ENCODE measurements at regions of chr22 and their contacts with region 1.

Region 1: DNA sequence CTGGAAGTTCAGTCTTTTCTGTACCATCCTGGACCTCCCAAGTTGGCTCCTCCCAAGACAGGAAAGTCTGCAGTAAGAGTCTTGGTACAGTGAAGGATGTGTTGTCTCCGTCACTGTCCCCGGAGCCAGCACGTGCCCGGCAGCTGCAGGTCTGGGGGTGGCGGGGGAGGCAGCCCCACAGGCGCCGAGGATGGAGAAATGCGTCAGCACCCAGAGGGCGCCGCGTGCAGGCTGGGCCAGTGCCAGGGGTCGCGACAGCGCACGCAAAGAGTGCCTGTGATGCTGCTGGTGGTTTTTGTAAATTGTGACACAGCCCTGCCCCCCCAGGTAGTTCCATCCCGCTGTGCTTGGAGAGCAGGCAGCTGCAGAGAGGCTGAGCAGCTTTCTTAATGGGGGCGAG is 1200.5 kb downstream of the BRD1 start:
- DNase-seq: no peak
- ATAC-seq: no peak
- H3K4me3 ChIP-seq: no peak overlapping the region
- H3K27ac ChIP-seq: no peak overlapping the region
- H3K4me1 ChIP-seq: no peaks in the 10 kb centered on the region
- H3K27me3 ChIP-seq: no peaks in the 10 kb centered on the region
- CTCF ChIP-seq: no peak
- EP300 ChIP-seq: no peak
- POLR2A ChIP-seq: no peak
- RAD21 ChIP-seq: no peak

Region 2: DNA sequence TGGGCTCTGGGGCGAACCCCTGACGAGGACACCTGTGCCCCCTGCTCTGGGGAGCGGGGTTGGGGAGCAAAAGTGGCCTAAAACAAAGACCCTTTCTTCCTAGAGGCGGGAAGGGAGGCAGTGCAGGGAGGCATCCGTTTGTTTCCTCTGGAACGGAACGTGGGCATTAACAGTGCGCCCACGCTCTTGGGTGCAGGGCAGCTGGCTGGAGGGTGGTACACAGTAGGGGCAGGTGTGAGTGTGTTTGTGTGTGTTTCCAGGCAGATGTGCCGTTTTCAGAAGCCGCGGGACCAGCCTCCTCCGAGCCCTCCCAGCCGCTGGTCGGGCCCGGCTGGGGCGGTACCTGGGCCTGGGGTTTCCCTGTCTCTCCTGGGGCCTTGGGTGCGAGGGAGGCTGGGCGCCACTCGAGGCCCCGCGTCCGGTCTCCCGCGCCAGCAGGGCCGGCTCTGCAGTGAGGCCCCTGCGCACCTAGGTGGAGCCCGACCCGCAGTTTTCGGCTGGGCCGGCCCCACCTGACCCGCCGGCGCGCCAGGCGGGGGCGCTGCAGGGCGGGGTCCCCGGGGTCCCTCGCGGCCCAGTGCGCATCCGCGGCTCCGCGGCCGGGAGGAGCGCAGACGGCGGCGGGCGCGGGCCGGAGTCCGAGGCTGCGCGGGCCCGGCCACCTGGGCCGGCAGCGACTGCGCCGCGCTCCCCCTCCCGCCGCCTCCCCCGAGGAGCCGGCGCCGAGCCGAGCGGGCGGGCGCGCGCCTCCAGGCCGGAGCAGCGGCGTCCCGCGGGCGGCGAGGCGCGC is 52.2 kb before region 1 on chr22:
- CTCF ChIA-PET with region 1: no interaction called
- POLR2A ChIA-PET with region 1: no interaction called
- RAD21 ChIA-PET with region 1: no interaction called
- SMC1A ChIA-PET with region 1: no interaction called
- in situ Hi-C with region 1: loop called (anchors 5 kb)
- intact Hi-C with region 1: no loop called
- DNase-seq: no peak
- ATAC-seq: no peak
- H3K4me3 ChIP-seq: no peak overlapping the region
- H3K27ac ChIP-seq: no peak overlapping the region
- H3K4me1 ChIP-seq: no peaks in the 10 kb centered on the region
- H3K27me3 ChIP-seq: no peaks in the 10 kb centered on the region
- CTCF ChIP-seq: no peak
- EP300 ChIP-seq: no peak
- POLR2A ChIP-seq: no peak
- RAD21 ChIP-seq: no peak

Region 3: DNA sequence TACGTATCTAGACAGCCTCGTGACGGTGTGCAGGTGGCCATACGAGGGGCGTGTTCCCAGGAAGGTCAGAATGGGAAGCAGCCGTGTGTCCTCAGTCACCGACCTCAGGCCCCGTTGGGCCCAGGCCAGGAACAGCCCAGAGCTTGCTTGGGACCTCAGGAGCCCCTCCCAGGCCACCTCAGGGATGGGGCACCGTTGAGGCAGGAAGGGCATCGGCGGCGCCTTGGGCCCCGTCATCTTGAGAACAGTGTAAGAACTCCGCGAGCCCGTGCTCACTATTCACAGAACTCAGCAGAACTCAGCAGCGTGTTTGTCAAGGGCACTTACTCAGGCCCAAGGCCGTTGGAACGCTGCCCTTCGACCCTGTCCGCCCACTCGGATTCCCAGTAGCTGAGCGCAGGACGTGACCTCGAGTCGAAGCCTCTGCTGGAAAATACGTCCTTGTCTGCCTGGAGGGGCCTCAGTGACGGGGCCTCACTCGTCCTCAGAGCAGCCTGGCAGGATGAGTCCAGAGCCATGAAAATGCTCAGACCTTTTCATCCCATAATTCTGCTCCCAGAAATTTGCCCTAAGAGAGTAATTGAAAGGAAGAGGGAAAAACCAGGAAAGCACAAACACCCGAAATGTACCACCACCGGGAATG is 65.7 kb after region 1 on chr22:
- CTCF ChIA-PET with region 1: no interaction called
- POLR2A ChIA-PET with region 1: no interaction called
- RAD21 ChIA-PET with region 1: no interaction called
- SMC1A ChIA-PET with region 1: no interaction called
- in situ Hi-C with region 1: no loop called
- intact Hi-C with region 1: no loop called
- DNase-seq: no peak
- ATAC-seq: no peak
- H3K4me3 ChIP-seq: no peak overlapping the region
- H3K27ac ChIP-seq: no peak overlapping the region
- H3K4me1 ChIP-seq: no peaks in the 10 kb centered on the region
- H3K27me3 ChIP-seq: no peaks in the 10 kb centered on the region
- CTCF ChIP-seq: no peak
- EP300 ChIP-seq: no peak
- POLR2A ChIP-seq: no peak
- RAD21 ChIP-seq: no peak

Measured in GM12878 (cell line).